Tibial artery (tissue), 4 donors: ENCODE measurements at regions of chr1 and their contacts with region 1.

Region 1: DNA sequence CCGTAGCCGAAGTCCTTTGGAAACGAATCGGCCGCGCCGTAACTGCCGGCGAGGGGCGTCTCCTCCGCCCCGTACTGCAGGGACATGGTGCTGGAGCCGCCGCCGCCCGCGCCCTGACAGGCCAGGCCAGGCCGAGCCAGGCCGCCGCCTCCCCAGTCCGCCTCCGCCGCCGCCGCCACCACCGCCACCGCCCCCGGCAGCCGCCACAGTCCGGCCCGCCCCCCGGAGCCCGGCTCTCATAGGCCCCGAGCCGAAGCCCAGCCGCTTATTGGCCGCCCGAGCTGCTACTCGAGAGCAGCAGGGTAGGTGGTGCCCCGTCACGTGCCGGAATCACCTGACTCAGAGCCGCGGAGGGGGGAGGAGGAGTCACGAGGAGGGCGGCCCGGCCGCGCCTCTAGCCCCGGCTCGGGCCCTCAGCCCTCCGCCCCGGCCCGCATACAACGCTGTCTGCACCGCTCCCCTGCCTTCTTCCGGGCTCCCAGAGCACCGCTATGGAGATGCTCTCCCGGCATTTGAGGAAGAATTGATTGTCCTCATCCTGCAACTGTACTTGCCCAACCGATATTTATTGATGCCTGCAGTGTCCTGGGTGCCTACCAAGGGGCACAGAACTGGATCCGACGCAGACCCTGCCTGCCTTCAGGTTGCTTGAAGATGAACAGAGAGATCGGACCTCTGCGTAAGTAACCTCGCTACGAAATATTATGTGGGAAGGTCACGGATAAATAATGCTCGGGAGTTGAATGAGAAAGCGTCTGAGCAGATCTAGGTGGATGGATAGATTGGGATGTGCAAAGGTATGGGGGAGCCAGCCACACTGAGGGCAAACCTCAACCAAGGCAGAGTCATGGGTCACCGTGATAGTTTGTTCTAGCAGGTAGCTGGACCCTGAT is at the start of gene RRAGC:
- DNase-seq: peak; percentile 100
- H3K4me3 ChIP-seq: peak within 1 kb of the TSS; percentile 97 to 98
- H3K27ac ChIP-seq: peak within 1 kb of the TSS; percentile 96 to 97
- H3K4me1 ChIP-seq: peaks cover 0 to 73% (median 28%) of the 10 kb centered on the region in 4 donors
- H3K27me3 ChIP-seq: no peaks in the 10 kb centered on the region
- CTCF ChIP-seq: peak in 1 of 2 experiments; percentile 11

Region 2: GRCh38 chr1:38990738-38991639 is 131.2 kb after region 1 on chr1 and contains the start of gene AKIRIN1:
- intact Hi-C with region 1: loop called (anchors 5 kb)
- DNase-seq: peak; percentile 97 to 99
- H3K4me3 ChIP-seq: peak within 1 kb of the TSS; percentile 99 to 100
- H3K27ac ChIP-seq: peak within 1 kb of the TSS; percentile 87 to 93
- H3K4me1 ChIP-seq: peaks cover 0 to 28% (median 20%) of the 10 kb centered on the region in 4 donors
- H3K27me3 ChIP-seq: no peaks in the 10 kb centered on the region
- CTCF ChIP-seq: peak; percentile 22 to 39